Spleen (tissue), 13 donors: ENCODE measurements at regions of chr1 and their contacts with region 1.

Region 1: GRCh38 chr1:207963427-207964194 is 52.7 kb upstream of the CD34 start:
- DNase-seq: peak; percentile 98
- H3K4me3 ChIP-seq: peak overlapping the region; percentile 35 to 75 (median 60)
- H3K27ac ChIP-seq: peak overlapping the region; percentile 79 to 94 (median 88)
- H3K4me1 ChIP-seq: peaks cover 13 to 43% (median 33%) of the 10 kb centered on the region in 6 donors
- H3K27me3 ChIP-seq: peaks cover 0 to 22% (median 12%) of the 10 kb centered on the region in 7 donors
- CTCF ChIP-seq: peak; percentile 98 to 100 (median 100)
- POLR2A ChIP-seq: peak in 1 of 3 donors; percentile 54

Region 2: GRCh38 chr1:207828485-207829158 is 135.0 kb before region 1 on chr1:
- intact Hi-C with region 1: loop called (anchors 5 kb)
- DNase-seq: no peak
- H3K4me3 ChIP-seq: peak overlapping the region in 1 of 8 donors; percentile 29
- H3K27ac ChIP-seq: peak overlapping the region; percentile 22 to 98 (median 95)
- H3K4me1 ChIP-seq: peaks cover 78 to 100% (median 95%) of the 10 kb centered on the region in 6 donors
- H3K27me3 ChIP-seq: no peaks in the 10 kb centered on the region
- CTCF ChIP-seq: peak; percentile 66 to 97 (median 87)
- POLR2A ChIP-seq: no peak

Region 3: DNA sequence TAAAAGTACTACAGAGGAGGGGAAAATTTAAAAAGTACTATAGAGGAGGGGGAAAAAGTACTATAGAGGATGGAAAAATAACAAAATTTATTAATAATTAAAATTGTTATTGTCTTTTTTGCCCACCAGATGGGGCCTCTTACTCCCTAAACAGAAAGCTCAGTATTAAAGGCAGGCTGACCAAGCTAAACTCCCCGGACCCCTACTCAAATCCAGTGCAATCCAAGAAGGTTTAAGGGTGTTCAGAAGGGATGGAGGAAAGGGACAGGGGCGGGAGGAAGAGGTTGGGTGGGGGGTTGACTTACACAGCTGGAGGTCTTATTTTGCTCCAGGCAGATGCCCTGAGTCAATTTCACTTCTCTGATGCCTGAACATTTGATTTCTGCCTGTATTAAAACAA is 66.4 kb before region 1 on chr1:
- intact Hi-C with region 1: loop called (anchors 5 kb)
- DNase-seq: no peak
- H3K4me3 ChIP-seq: no peak overlapping the region
- H3K27ac ChIP-seq: peak overlapping the region in 4 of 8 donors; percentile 17 to 41 (median 30)
- H3K4me1 ChIP-seq: peaks cover 0 to 9% (median 0%) of the 10 kb centered on the region in 6 donors
- H3K27me3 ChIP-seq: no peaks in the 10 kb centered on the region
- CTCF ChIP-seq: peak in 6 of 11 experiments; percentile 7 to 30 (median 16)
- POLR2A ChIP-seq: no peak